MCF 10A (cell line): ENCODE measurements at regions of chr2 and their contacts with region 1.

Region 1: DNA sequence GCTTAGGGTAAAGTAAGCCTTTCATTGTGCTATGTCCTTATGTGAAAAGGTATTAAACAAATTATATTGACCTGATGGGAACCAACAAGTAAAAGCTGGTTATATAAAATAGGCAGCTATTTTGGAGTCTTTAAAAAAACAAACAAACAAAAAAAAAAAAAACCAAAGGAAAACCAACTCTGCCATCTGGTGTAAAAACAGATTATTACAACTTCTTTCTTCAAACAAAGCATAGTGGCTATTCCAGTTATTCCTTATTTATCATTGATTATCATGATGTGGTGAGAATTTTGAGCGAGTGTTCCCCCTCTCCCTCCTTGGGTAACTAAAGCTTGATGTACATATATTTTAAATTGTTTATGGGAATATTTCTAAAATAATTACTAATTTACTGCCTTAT is 122.4 kb upstream of the FHL2 start:
- DNase-seq: peak; percentile 40
- H3K4me3 Mint-ChIP-seq: no peak overlapping the region
- H3K27ac Mint-ChIP-seq: no peak overlapping the region
- H3K4me1 Mint-ChIP-seq: no peaks in the 10 kb centered on the region
- H3K27me3 Mint-ChIP-seq: no peaks in the 10 kb centered on the region
- CTCF ChIP-seq: peak; percentile 57

Region 2: GRCh38 chr2:105337124-105338019 is 183.8 kb before region 1 on chr2 and contains the start of gene C2orf49:
- CTCF ChIA-PET with region 1: interaction called, 17 read pairs
- POLR2A ChIA-PET with region 1: interaction called, 3 read pairs
- intact Hi-C with region 1: no loop called
- DNase-seq: peak; percentile 86
- H3K4me3 Mint-ChIP-seq: peak within 1 kb of the TSS; percentile 86
- H3K27ac Mint-ChIP-seq: peak within 1 kb of the TSS; percentile 100
- H3K4me1 Mint-ChIP-seq: peaks cover 13% of the 10 kb centered on the region
- H3K27me3 Mint-ChIP-seq: no peaks in the 10 kb centered on the region
- CTCF ChIP-seq: no peak
- total RNA-seq, gene C2orf49: 24.2 and 24.5 TPM in 2 replicates

Region 3: DNA sequence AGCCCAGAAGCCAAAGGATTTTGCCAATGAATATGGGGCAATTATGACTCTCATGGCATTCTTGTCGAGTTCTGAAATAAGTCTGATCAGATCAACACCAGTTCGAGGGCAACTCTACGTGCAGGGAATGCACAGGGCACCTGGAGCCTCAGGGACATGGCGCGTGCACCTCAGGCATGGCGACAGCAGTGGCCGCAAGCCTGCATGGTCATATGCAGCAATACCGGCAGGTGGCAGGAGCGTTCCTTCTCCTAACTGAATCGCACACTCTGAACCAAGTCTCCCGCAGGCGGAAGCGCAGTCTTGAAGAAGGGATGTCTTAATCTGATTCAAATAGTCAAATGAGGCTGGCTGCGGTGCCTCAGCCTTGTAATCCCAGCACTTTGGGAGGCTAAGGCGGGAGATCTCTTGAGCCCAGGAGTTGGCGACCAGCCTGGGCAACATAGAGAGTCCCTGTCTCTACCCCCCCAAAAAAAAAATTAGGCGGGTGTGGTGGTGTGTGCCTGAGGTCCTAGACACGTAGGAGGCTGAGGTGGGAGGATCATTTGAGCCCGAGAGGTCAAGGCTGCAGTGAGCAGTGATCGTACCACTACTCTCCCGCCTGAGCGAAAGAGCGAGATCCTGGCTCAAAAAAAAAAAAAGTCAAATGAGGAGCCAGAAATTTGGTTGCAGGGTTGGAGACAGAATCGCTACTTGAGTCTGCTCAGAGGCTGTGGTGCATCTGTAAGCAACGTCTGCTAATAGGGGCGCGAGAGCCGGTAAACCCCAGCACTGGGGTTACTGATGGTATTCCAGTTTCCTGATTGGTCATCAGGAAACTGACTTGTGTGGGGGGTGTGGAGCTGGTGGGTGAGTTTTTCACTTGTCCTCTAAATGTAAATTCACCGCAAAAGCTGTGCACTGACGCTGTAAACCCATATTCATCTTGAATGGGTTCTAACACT is 151.2 kb before region 1 on chr2:
- CTCF ChIA-PET with region 1: interaction called, 92 read pairs
- POLR2A ChIA-PET with region 1: interaction called, 10 read pairs
- intact Hi-C with region 1: loop called (anchors 1 kb)
- DNase-seq: peak; percentile 60
- H3K4me3 Mint-ChIP-seq: no peak overlapping the region
- H3K27ac Mint-ChIP-seq: no peak overlapping the region
- H3K4me1 Mint-ChIP-seq: no peaks in the 10 kb centered on the region
- H3K27me3 Mint-ChIP-seq: no peaks in the 10 kb centered on the region
- CTCF ChIP-seq: peak; percentile 51

Region 4: DNA sequence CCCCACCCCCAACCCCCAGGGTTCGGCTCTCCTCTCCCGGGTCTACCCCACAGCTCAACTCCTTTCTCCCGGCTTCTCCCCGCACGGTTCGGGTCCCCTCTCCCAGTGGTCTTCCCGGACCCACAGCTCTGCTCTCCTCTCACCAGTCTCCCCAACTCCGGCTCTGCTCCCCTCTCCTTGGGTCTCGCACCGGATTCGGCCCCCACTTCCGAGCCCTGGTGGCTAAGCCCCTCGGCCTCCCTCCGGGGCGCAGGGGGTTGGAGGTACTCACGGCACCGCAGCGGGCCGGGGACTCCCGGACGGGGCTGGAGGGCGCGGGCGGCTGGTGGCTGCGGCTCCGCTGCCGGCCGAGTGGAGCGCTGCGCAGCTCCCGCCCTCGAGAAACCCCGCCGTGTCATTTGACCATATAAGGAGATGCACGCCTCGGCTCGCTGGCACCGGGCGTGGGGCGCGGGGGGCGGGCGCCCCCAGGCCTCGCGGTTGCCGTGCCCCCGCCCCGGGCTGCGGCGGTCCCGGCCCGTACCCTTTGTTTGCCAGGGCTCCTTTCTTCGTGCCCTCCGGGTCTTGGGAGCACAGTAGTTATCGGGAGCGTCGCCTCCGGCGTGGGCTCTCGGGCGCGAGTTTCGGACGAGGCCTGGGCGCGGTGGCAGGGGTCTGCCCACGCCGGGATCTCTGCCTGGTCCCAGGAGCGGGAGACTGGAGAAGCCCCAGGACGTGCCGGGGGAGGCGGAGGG is 122.3 kb before region 1 on chr2 and contains the start of gene FHL2:
- CTCF ChIA-PET with region 1: interaction called, 14 read pairs
- POLR2A ChIA-PET with region 1: interaction called, 6 read pairs
- intact Hi-C with region 1: no loop called
- DNase-seq: peak; percentile 77
- H3K4me3 Mint-ChIP-seq: peak within 1 kb of the TSS; percentile 87
- H3K27ac Mint-ChIP-seq: peak within 1 kb of the TSS; percentile 91
- H3K4me1 Mint-ChIP-seq: peaks cover 42% of the 10 kb centered on the region
- H3K27me3 Mint-ChIP-seq: no peaks in the 10 kb centered on the region
- CTCF ChIP-seq: peak; percentile 48
- total RNA-seq, gene FHL2: 77.3 and 93.2 TPM in 2 replicates

Region 5: DNA sequence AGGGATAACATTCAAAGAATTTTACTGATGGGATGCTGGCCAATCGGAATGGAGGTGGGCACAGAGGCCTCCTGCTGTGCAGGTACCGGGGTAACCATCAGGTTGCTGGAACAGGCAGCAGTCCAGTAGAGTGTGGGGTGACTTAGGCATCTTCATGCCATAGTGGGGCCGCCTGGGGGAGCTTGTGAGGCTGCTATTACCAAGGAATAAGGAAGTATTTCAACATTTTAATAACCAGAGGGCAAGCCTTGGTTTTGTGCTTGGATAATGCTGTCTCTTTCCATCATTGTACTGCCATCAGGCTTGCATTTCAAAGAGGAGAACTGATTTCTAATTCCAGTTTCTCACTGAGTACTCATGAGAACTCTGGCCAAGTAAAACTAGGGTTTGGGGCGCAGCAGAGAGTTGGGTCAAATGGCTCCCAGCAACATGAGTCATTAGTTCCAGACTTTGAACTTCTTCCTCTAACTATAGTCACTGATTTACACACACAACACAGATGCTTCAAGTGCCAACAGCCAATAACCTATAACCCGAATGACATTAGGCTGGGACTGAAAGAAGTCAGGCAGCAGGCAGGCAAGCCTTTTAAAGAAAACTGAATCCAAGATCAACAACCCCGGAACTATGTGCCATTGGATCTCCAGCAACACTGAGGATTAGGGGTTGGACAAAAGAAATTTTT is 66.3 kb before region 1 on chr2:
- CTCF ChIA-PET with region 1: interaction called, 9 read pairs
- POLR2A ChIA-PET with region 1: interaction called, 4 read pairs
- intact Hi-C with region 1: loop called (anchors 1 kb)
- DNase-seq: peak; percentile 95
- H3K4me3 Mint-ChIP-seq: peak overlapping the region; percentile 15
- H3K27ac Mint-ChIP-seq: peak overlapping the region; percentile 91
- H3K4me1 Mint-ChIP-seq: peaks cover 28% of the 10 kb centered on the region
- H3K27me3 Mint-ChIP-seq: no peaks in the 10 kb centered on the region
- CTCF ChIP-seq: peak; percentile 68

Region 6: GRCh38 chr2:105553538-105554196 is 32.5 kb after region 1 on chr2:
- CTCF ChIA-PET with region 1: no interaction called
- POLR2A ChIA-PET with region 1: no interaction called
- intact Hi-C with region 1: no loop called
- DNase-seq: peak; percentile 42
- H3K4me3 Mint-ChIP-seq: no peak overlapping the region
- H3K27ac Mint-ChIP-seq: no peak overlapping the region
- H3K4me1 Mint-ChIP-seq: no peaks in the 10 kb centered on the region
- H3K27me3 Mint-ChIP-seq: peaks cover 83% of the 10 kb centered on the region
- CTCF ChIP-seq: no peak